ENCODE measurements at regions of chr17 and their contacts with region 1.

Region 1: GRCh38 chr17:80575057-80575875 is 30.6 kb downstream of the RPTOR start:
- DNase-seq: peak; percentile 98
- ATAC-seq: peak; percentile 99
- H3K4me3 ChIP-seq: no peak overlapping the region
- H3K27ac ChIP-seq: no peak overlapping the region
- H3K4me1 ChIP-seq: no peaks in the 10 kb centered on the region
- H3K27me3 ChIP-seq: no peaks in the 10 kb centered on the region
- CTCF ChIP-seq: peak; percentile 100

Region 2: DNA sequence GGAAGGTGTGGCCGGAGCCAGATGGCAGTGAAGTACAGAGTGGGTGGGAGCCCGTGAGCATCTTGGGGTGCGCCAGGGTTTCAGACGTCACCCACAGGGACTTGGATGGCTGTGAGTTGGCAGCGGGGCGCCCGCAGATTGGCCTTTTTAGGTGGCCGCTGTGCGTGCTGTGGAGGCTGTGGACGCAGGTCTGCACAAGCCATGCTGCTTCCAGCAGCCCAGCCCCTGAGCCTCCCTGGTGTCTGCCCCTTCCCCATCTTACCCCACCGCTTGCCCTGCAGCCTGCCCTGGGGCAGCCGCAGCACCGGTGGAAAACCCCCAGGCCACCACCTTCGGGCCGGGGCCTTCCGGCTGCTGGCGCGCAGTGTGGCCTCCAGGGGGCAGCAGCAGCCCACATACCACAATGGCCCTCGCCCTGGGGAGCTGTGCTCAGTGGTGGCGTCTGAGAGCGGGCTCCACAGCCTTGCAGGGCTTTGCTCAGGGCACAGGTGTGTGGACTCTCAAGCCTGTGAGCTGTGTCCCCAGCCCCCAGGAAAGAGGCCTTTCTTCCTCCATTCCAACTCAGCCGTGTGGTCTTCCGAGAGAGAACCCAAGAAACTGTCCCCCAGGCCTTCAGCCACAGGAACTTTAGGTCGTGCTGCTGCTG is 148.5 kb before region 1 on chr17:
- CTCF ChIA-PET with region 1: interaction called, 8 read pairs
- POLR2A ChIA-PET with region 1: no interaction called
- intact Hi-C with region 1: loop called (anchors 1 kb)
- DNase-seq: peak; percentile 82
- ATAC-seq: peak; percentile 86
- H3K4me3 ChIP-seq: no peak overlapping the region
- H3K27ac ChIP-seq: no peak overlapping the region
- H3K4me1 ChIP-seq: no peaks in the 10 kb centered on the region; the same call in 1 of the 2 replicates
- H3K27me3 ChIP-seq: no peaks in the 10 kb centered on the region
- CTCF ChIP-seq: peak; percentile 99

Region 3: DNA sequence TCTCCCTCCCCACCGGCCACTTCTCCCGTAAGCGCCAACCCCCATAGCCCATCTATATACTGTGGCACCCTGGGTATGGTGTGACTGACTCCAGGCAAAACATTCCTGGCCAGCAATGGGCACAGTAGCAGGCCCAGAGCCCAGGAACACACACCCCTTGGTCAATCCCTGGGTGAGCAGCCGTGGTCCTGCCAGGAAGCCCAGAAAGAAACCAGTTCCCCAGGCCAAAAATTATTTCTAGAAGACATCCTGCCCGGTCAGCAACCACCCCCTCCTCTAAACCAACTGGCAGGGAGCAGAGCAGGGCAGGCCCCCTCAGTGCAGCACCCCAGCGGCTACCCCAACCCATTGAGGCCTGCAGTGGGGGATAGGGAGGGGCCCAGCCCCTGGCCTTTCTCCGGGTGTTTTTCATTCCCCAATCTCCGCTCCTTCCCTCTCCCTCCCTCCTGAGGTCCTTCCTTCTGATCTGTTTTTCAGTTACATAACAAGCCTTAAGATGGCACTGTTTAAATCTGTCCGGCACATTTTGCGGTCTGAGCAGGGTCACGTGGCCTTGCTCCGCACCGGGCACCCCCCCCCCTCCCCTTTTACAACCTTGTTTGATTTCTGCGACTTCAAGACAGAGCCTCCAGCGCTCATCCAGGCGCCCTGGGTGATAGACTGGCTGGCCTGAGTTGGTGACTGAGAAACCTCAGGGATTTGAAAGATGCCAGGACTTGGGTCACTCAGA is 100.9 kb before region 1 on chr17:
- CTCF ChIA-PET with region 1: interaction called, 4 read pairs
- POLR2A ChIA-PET with region 1: no interaction called
- intact Hi-C with region 1: loop called (anchors 2 kb)
- DNase-seq: peak; percentile 83
- ATAC-seq: peak; percentile 60
- H3K4me3 ChIP-seq: peak overlapping the region; percentile 56
- H3K27ac ChIP-seq: no peak overlapping the region
- H3K4me1 ChIP-seq: peaks cover 19% of the 10 kb centered on the region
- H3K27me3 ChIP-seq: peaks cover 44% of the 10 kb centered on the region
- CTCF ChIP-seq: peak; percentile 68

Measured in PC-3 (cell line).